CD4-positive, alpha-beta memory T cell (primary cell): ENCODE measurements at regions of chr12 and their contacts with region 1.

Region 1: DNA sequence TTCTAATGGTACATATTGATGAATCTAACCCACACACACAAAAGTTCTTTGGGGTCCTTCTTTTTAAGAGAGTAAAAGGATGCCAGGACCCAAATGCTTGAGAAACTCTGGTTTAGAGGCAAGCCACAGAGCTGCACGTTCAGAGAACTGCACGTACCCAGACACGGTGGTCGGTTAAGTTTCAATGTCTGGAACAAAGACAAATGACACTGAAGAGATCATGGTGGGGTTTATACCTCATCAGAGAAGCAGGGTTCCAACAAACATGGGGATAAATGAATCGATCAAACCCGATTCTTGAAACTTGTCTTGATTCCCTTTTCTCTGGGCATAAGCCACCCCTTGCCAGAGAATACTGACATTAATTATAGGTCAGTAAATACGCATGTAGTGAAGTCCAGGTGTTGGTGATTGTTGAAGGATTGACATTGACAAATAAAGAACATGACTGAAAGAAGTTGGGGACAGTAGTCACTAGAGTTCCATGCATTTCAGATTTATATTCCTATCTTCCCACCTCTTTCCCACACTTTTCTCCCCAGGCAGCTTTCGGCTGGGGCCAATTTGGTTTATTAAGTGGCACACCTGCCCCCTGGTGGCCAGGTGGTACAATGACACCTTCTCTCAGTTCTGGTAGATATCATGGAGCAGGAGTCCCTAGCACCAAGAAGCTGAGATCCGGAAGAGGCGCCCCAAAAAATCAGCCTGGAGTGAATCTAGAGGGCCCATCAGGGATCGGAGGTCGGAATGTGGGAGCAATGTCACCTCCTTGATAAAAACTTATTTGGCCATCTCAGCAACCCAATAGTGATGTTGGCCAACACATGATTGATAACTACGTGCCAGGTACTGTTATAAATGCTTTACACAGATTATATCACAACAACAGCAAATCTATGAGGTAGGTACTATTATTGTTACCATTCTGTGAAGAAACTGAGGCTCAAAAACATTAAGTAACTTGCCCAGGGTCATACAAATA is 17.8 kb upstream of the HDAC7 start:
- DNase-seq: peak; percentile 50 to 73 (median 64)
- H3K4me3 ChIP-seq: no peak overlapping the region
- H3K4me3 Mint-ChIP-seq: no peak overlapping the region
- H3K27ac ChIP-seq: no peak overlapping the region
- H3K27ac Mint-ChIP-seq: peak overlapping the region in 6 of 7 donors; percentile 10 to 93 (median 40)
- H3K4me1 ChIP-seq: peaks cover 47% of the 10 kb centered on the region
- H3K4me1 Mint-ChIP-seq: peaks cover 31 to 53% (median 42%) of the 10 kb centered on the region in 4 donors
- H3K27me3 ChIP-seq: no peaks in the 10 kb centered on the region
- H3K27me3 Mint-ChIP-seq: no peaks in the 10 kb centered on the region

Region 2: GRCh38 chr12:47758834-47759690 is 78.4 kb before region 1 on chr12 and contains the start of gene RAPGEF3:
- CTCF ChIA-PET with region 1: interaction called, 16 read pairs
- POLR2A ChIA-PET with region 1: interaction called, 3 read pairs
- intact Hi-C with region 1: no loop called
- DNase-seq: peak; percentile 50 to 78 (median 63)
- H3K4me3 ChIP-seq: peak within 1 kb of the TSS; percentile 42 to 52
- H3K4me3 Mint-ChIP-seq: peak within 1 kb of the TSS; percentile 72 to 83 (median 80)
- H3K27ac ChIP-seq: peak within 1 kb of the TSS; percentile 55
- H3K27ac Mint-ChIP-seq: peak within 1 kb of the TSS in 6 of 7 donors; percentile 12 to 74 (median 45)
- H3K4me1 ChIP-seq: peaks cover 40% of the 10 kb centered on the region
- H3K4me1 Mint-ChIP-seq: peaks cover 18 to 27% (median 23%) of the 10 kb centered on the region in 4 donors
- H3K27me3 ChIP-seq: no peaks in the 10 kb centered on the region
- H3K27me3 Mint-ChIP-seq: no peaks in the 10 kb centered on the region
- total RNA-seq, gene RAPGEF3: 0.15 to 0.39 TPM

Region 3: GRCh38 chr12:47779301-47779942 is 58.1 kb before region 1 on chr12:
- CTCF ChIA-PET with region 1: interaction called, 484 read pairs
- POLR2A ChIA-PET with region 1: interaction called, 41 read pairs
- intact Hi-C with region 1: loop called (anchors 1 kb)
- DNase-seq: peak; percentile 84 to 87 (median 86)
- H3K4me3 ChIP-seq: no peak overlapping the region
- H3K4me3 Mint-ChIP-seq: peak overlapping the region in 1 of 8 donors; percentile 12
- H3K27ac ChIP-seq: no peak overlapping the region
- H3K27ac Mint-ChIP-seq: peak overlapping the region in 4 of 7 donors; percentile 3 to 83 (median 81)
- H3K4me1 ChIP-seq: peaks cover 7% of the 10 kb centered on the region
- H3K4me1 Mint-ChIP-seq: peaks cover 7 to 24% (median 12%) of the 10 kb centered on the region in 4 donors
- H3K27me3 ChIP-seq: no peaks in the 10 kb centered on the region
- H3K27me3 Mint-ChIP-seq: no peaks in the 10 kb centered on the region

Region 4: GRCh38 chr12:47797441-47797840 is 40.0 kb before region 1 on chr12:
- CTCF ChIA-PET with region 1: interaction called, 568 read pairs
- POLR2A ChIA-PET with region 1: interaction called, 516 read pairs
- intact Hi-C with region 1: loop called (anchors 1 kb)
- DNase-seq: peak in 2 of 5 donors; percentile 20 to 21
- H3K4me3 ChIP-seq: no peak overlapping the region
- H3K4me3 Mint-ChIP-seq: no peak overlapping the region
- H3K27ac ChIP-seq: no peak overlapping the region
- H3K27ac Mint-ChIP-seq: peak overlapping the region in 3 of 7 donors; percentile 56 to 80 (median 73)
- H3K4me1 ChIP-seq: peaks cover 26% of the 10 kb centered on the region
- H3K4me1 Mint-ChIP-seq: peaks cover 15 to 32% (median 23%) of the 10 kb centered on the region in 4 donors
- H3K27me3 ChIP-seq: no peaks in the 10 kb centered on the region
- H3K27me3 Mint-ChIP-seq: no peaks in the 10 kb centered on the region

Region 5: DNA sequence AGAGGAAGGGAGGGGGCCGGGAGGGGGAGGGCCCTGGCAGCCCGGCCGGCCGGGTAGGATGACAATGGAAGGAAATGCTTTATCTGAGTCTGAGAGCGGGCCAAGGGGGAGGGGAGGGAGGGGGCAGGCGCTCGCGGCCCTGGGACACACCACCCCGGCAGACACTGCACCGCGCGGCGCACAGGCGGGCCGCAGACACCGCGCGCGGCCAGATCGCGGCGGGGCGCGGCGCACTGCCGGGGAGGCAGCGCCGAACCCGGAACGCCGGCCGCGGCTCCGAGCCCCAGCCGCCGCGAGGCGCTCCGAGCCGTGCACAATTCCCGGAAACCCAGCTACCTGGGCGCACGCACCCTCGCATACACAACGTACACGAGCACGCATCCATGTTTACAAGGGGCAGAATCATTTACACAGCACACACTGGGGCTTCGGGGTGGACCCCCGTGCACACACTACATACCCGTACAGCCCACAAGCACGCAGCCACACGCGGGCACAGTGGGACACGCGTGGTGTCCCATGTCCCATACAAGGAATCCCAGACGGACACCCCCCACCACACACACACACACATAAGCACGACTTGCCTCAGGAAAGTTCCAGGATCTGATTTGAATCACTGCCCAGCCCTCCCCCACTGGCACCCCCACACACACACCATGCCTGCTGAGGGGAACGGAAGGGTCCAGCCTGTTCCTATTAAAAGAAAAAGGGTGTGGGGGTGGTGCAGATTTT is 17.4 kb before region 1 on chr12 and contains the start of gene HDAC7:
- CTCF ChIA-PET with region 1: interaction called, 568 read pairs
- POLR2A ChIA-PET with region 1: interaction called, 516 read pairs
- intact Hi-C with region 1: loop called (anchors 1 kb)
- DNase-seq: peak; percentile 55 to 86 (median 68)
- H3K4me3 ChIP-seq: peak within 1 kb of the TSS; percentile 79 to 84
- H3K4me3 Mint-ChIP-seq: peak within 1 kb of the TSS; percentile 91 to 97 (median 95)
- H3K27ac ChIP-seq: peak within 1 kb of the TSS; percentile 79
- H3K27ac Mint-ChIP-seq: peak within 1 kb of the TSS; percentile 93 to 98 (median 97)
- H3K4me1 ChIP-seq: peaks cover 87% of the 10 kb centered on the region
- H3K4me1 Mint-ChIP-seq: peaks cover 62 to 87% (median 77%) of the 10 kb centered on the region in 4 donors
- H3K27me3 ChIP-seq: no peaks in the 10 kb centered on the region
- H3K27me3 Mint-ChIP-seq: no peaks in the 10 kb centered on the region
- total RNA-seq, gene HDAC7: 139 to 142 TPM

Region 6: GRCh38 chr12:48690990-48691389 is 853.5 kb after region 1 on chr12:
- CTCF ChIA-PET with region 1: no interaction called
- POLR2A ChIA-PET with region 1: no interaction called
- intact Hi-C with region 1: no loop called
- DNase-seq: no peak
- H3K4me3 ChIP-seq: no peak overlapping the region
- H3K4me3 Mint-ChIP-seq: no peak overlapping the region
- H3K27ac ChIP-seq: no peak overlapping the region
- H3K27ac Mint-ChIP-seq: peak overlapping the region in 3 of 7 donors; percentile 17 to 56 (median 53)
- H3K4me1 ChIP-seq: no peaks in the 10 kb centered on the region
- H3K4me1 Mint-ChIP-seq: peaks cover 3 to 5% (median 4%) of the 10 kb centered on the region in 4 donors
- H3K27me3 ChIP-seq: no peaks in the 10 kb centered on the region
- H3K27me3 Mint-ChIP-seq: no peaks in the 10 kb centered on the region